Right ventricle myocardium inferior (tissue), 1 donor: ENCODE measurements at regions of chr14 and their contacts with region 1.

Region 1: DNA sequence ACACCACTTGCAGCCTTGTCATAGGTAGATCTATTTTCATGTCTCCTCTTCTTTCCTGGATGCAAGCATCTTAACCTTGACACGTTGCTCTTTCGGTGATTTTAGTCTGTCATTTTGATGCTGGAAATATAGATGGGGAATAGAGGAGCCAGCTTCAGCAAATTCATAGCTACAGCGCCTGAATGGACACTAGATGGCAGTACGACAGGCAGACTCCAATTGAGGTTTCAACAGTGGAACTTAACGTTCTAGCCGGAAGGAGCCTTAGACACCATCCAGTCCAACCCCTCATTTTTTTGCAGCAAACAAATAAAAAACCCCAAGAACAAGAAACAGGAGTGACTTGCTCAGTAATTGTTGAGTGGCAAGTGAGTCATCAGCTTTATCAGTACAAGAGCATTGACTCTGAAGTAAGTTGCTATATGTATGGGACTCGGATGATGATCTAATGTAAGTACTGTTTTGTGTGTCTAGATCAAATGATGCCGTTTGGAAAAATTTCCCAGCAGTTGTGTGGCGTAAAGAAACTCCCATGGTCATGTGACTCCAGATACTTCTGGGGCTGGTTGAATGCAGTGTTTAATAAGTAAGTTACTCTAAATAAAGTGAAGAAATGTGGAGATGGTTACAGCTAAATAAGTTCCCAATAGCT is 9.0 kb downstream of the DMAC2L start:
- DNase-seq: no peak
- ATAC-seq: peak; percentile 95

Region 2: GRCh38 chr14:50095895-50096294 is 225.2 kb before region 1 on chr14:
- intact Hi-C with region 1: no loop called
- DNase-seq: no peak
- ATAC-seq: no peak

Region 3: DNA sequence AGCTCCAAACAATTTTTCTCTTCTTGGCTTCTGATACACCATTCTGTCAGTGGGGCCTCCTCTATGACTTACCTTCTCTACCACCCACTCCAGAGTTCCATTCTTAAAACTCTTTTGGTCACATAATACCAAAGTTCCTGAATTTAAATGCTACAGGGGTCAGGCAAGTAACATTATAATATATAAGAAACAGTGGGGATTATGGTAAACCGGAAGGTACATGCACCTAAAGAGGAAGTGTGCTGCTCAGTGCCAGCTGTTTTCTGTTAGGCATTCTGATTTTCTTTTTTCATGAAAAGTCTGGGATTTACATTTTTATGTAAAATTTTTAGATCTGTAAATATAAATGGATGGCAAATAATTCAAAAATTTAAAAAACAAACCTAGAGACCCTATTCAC is 129.6 kb before region 1 on chr14:
- intact Hi-C with region 1: no loop called
- DNase-seq: no peak
- ATAC-seq: no peak

Region 4: GRCh38 chr14:50396631-50397390 is 75.7 kb after region 1 on chr14 and contains the start of gene CDKL1:
- intact Hi-C with region 1: loop called (anchors 5 kb)
- DNase-seq: peak; percentile 86
- ATAC-seq: peak; percentile 93
- total RNA-seq, gene CDKL1: 3.3 TPM

Region 5: GRCh38 chr14:50532502-50533240 is 211.5 kb after region 1 on chr14 and contains the start of gene MAP4K5:
- intact Hi-C with region 1: loop called (anchors 1 kb)
- DNase-seq: peak; percentile 96
- ATAC-seq: peak; percentile 100
- total RNA-seq, gene MAP4K5: 14.3 TPM